PC-3 (cell line): ENCODE measurements at regions of chr18 and their contacts with region 1.

Region 1: DNA sequence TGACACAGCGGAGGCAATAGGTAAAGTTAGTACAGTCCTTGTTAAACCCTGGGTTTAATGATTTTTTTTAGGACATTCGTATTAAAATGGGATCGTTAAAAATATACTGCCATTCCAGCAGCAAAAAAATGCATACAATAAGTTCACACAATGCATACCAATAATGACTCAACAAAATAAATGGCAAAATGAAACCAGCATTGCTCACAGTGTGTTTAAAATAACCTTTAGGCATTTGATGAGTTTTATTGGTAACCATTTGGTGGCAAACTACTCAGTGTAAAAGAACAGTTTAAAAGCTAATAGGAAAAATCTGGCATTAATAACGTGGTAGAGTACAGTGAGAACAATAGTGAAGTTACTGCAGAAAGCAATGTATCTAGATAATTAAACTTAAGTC is 539.0 kb upstream of the PIK3C3 start:
- DNase-seq: peak; percentile 62
- ATAC-seq: peak; percentile 70
- H3K4me3 ChIP-seq: no peak overlapping the region
- H3K27ac ChIP-seq: peak overlapping the region; percentile 38
- H3K4me1 ChIP-seq: peaks cover 12% of the 10 kb centered on the region; the same call in 1 of the 2 replicates
- H3K27me3 ChIP-seq: no peaks in the 10 kb centered on the region
- CTCF ChIP-seq: no peak

Region 2: DNA sequence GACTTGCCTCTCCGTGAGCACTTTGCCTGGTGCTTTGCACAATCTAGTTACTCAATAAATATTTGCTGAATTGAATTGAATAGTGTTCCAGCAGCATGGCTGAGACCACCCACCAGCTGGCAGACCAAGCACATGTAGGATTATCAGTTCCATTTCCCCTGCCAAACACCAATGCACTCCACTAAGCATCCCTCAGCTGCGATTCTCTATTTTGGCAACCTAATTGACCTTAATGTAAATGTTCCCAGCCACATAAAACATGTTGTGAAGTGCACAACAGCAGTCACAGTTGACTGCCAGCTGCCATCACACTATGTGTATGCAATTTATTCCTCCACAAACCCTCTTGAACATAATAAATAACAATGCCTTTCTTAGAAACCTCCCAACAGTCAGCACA is 1340.4 kb before region 1 on chr18:
- CTCF ChIA-PET with region 1: no interaction called
- POLR2A ChIA-PET with region 1: no interaction called
- intact Hi-C with region 1: no loop called
- DNase-seq: no peak
- ATAC-seq: no peak
- H3K4me3 ChIP-seq: no peak overlapping the region
- H3K27ac ChIP-seq: no peak overlapping the region
- H3K4me1 ChIP-seq: no peaks in the 10 kb centered on the region
- H3K27me3 ChIP-seq: no peaks in the 10 kb centered on the region
- CTCF ChIP-seq: no peak

Region 3: GRCh38 chr18:41466436-41467160 is 50.6 kb after region 1 on chr18:
- CTCF ChIA-PET with region 1: no interaction called
- POLR2A ChIA-PET with region 1: interaction called, 12 read pairs
- intact Hi-C with region 1: no loop called
- DNase-seq: peak; percentile 48
- ATAC-seq: peak; percentile 64
- H3K4me3 ChIP-seq: no peak overlapping the region
- H3K27ac ChIP-seq: no peak overlapping the region
- H3K4me1 ChIP-seq: peaks cover 22% of the 10 kb centered on the region
- H3K27me3 ChIP-seq: no peaks in the 10 kb centered on the region
- CTCF ChIP-seq: no peak

Region 4: GRCh38 chr18:41504316-41504715 is 88.3 kb after region 1 on chr18:
- CTCF ChIA-PET with region 1: no interaction called
- POLR2A ChIA-PET with region 1: no interaction called
- intact Hi-C with region 1: loop called (anchors 1 kb)
- DNase-seq: peak; percentile 64
- ATAC-seq: peak; percentile 58
- H3K4me3 ChIP-seq: 0 out of 2 replicates have a peak overlapping the region, but pooled peaks have one; percentile 32
- H3K27ac ChIP-seq: peak overlapping the region; percentile 99
- H3K4me1 ChIP-seq: peaks cover 29% of the 10 kb centered on the region
- H3K27me3 ChIP-seq: no peaks in the 10 kb centered on the region
- CTCF ChIP-seq: no peak